Heart left ventricle (tissue), 16 donors: ENCODE measurements at regions of chr5 and their contacts with region 1.

Region 1: GRCh38 chr5:150656191-150657132 is 4.6 kb upstream of the MYOZ3 start:
- DNase-seq: peak; percentile 78 to 88 (median 84)
- ATAC-seq: peak; percentile 28 to 60 (median 48)
- H3K4me3 ChIP-seq: peak overlapping the region in 11 of 12 donors; percentile 30 to 65 (median 53)
- H3K27ac ChIP-seq: peak overlapping the region; percentile 81 to 96 (median 90)
- H3K4me1 ChIP-seq: peaks cover 3 to 82% (median 58%) of the 10 kb centered on the region in 12 donors
- H3K27me3 ChIP-seq: no peaks in the 10 kb centered on the region
- CTCF ChIP-seq: peak; percentile 50 to 90 (median 78)
- POLR2A ChIP-seq: no peak

Region 2: GRCh38 chr5:150449517-150450339 is 206.7 kb before region 1 on chr5 and contains the start of gene RPS14:
- intact Hi-C with region 1: loop called in 1 of 10 experiments (anchors 10 kb)
- DNase-seq: peak; percentile 93 to 96 (median 95)
- ATAC-seq: peak; percentile 96 to 98 (median 97)
- H3K4me3 ChIP-seq: peak within 1 kb of the TSS; percentile 75 to 90 (median 83)
- H3K27ac ChIP-seq: peak within 1 kb of the TSS; percentile 89 to 99 (median 96)
- H3K4me1 ChIP-seq: peaks cover 0 to 37% (median 16%) of the 10 kb centered on the region in 12 donors
- H3K27me3 ChIP-seq: no peaks in the 10 kb centered on the region
- CTCF ChIP-seq: peak; percentile 79 to 99 (median 94)
- POLR2A ChIP-seq: peak in 1 of 2 donors; percentile 84
- total RNA-seq, gene RPS14: 1,031 to 1,428 (median 1,294) TPM

Region 3: DNA sequence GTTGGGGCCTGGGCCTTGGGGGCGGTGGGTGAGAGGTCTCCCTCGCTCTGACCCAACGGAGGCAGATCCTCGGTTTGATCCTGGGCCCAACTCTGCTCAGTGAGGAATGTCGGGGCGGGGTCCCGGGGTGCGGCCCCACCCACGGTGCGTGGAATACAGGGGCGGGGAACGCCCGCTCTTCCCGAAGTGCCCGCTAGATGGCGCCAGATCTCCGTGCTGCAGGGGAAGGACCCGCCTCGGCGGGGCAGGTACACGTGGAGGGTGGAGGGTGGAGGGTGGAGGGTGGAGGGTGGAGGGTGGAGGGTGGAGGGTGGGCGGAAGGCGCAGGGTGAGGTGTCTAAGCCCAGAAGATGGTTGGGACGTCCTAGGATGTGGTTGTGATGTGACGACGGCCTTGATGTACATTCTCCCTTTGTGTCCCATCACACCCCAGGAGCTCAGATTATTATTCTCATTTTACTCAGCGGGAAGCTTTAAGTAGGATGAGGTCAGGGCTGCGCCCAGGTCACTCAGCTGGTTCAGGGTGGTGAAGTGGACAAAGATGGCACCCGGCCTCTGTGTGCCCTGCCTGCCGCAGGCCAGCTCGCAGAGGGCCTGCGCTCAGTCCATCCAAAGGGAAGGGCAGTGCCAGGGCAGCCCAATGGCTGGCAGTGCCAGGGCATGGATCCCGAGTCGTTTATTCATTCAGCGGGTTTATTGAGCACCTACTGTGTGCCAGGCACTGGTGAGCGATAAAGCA is 197.5 kb before region 1 on chr5:
- intact Hi-C with region 1: loop called in 5 of 10 experiments (anchors 10 kb)
- DNase-seq: peak; percentile 75 to 90 (median 80)
- ATAC-seq: peak; percentile 86 to 96 (median 92)
- H3K4me3 ChIP-seq: peak overlapping the region in 8 of 12 donors; percentile 15 to 46 (median 36)
- H3K27ac ChIP-seq: peak overlapping the region in 2 of 12 donors; percentile 2 to 53
- H3K4me1 ChIP-seq: peaks cover 0 to 14% (median 4%) of the 10 kb centered on the region in 12 donors
- H3K27me3 ChIP-seq: no peaks in the 10 kb centered on the region
- CTCF ChIP-seq: peak; percentile 68 to 97 (median 82)
- POLR2A ChIP-seq: no peak

Region 4: GRCh38 chr5:150560401-150561193 is 95.9 kb before region 1 on chr5:
- intact Hi-C with region 1: loop called (anchors 1 to 5 kb)
- DNase-seq: peak in 4 of 5 donors; percentile 81 to 86 (median 84)
- ATAC-seq: peak; percentile 74 to 90 (median 86)
- H3K4me3 ChIP-seq: no peak overlapping the region
- H3K27ac ChIP-seq: no peak overlapping the region
- H3K4me1 ChIP-seq: peaks cover 0 to 20% (median 4%) of the 10 kb centered on the region in 12 donors
- H3K27me3 ChIP-seq: no peaks in the 10 kb centered on the region
- CTCF ChIP-seq: peak; percentile 83 to 98 (median 96)
- POLR2A ChIP-seq: no peak

Region 5: DNA sequence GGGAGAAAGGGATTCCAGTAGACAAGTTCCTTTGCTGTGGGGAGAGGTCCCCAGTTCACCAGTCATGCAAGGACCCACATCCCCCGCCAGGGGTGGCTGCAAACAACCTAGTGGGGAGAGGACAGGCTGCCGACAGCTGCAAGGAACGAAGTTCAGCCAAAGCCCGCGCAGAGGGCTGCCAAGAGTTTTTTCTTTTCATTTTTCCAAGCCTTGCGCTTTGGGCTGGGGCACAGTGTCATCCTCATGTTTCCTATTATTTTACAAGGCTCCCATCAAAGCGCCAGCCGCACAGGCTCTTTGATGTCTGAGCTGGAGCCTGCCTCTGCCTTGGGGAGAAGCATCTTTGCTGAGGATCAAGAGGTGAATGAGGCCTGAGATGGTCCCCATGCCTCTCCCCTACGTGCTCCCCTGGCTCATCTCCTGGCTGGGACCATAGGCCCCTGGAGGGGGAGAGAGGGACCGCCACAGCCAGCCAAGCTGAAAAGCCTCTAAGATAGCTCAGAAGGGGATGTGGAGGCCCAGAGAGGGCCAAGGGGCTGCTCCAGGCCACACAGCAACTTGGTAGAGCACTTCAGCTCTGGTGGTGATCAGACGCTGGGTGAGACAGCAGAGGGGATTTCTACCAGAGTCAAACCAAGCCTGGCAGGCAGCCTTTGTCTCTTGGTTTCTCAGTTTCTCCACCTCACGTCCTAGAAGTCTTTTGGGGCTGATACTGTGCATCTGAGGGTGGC is 66.4 kb before region 1 on chr5:
- intact Hi-C with region 1: loop called in 9 of 10 experiments (anchors 1 to 5 kb)
- DNase-seq: peak; percentile 77 to 84 (median 84)
- ATAC-seq: peak; percentile 72 to 88 (median 76)
- H3K4me3 ChIP-seq: no peak overlapping the region
- H3K27ac ChIP-seq: peak overlapping the region in 10 of 12 donors; percentile 52 to 83 (median 74)
- H3K4me1 ChIP-seq: peaks cover 8 to 63% (median 55%) of the 10 kb centered on the region in 12 donors
- H3K27me3 ChIP-seq: no peaks in the 10 kb centered on the region
- CTCF ChIP-seq: peak; percentile 64 to 90 (median 80)
- POLR2A ChIP-seq: no peak

Region 6: GRCh38 chr5:150599917-150600499 is 56.5 kb before region 1 on chr5:
- intact Hi-C with region 1: loop called in 1 of 10 experiments (anchors 5 kb)
- DNase-seq: peak; percentile 87 to 92 (median 91)
- ATAC-seq: peak; percentile 43 to 76 (median 52)
- H3K4me3 ChIP-seq: peak overlapping the region in 4 of 12 donors; percentile 2 to 41 (median 28)
- H3K27ac ChIP-seq: peak overlapping the region; percentile 44 to 90 (median 80)
- H3K4me1 ChIP-seq: peaks cover 19 to 90% (median 67%) of the 10 kb centered on the region in 12 donors
- H3K27me3 ChIP-seq: no peaks in the 10 kb centered on the region
- CTCF ChIP-seq: no peak
- POLR2A ChIP-seq: no peak

Region 7: GRCh38 chr5:150689120-150689519 is 32.7 kb after region 1 on chr5:
- intact Hi-C with region 1: no loop called
- DNase-seq: no peak
- ATAC-seq: no peak
- H3K4me3 ChIP-seq: no peak overlapping the region
- H3K27ac ChIP-seq: no peak overlapping the region
- H3K4me1 ChIP-seq: no peaks in the 10 kb centered on the region
- H3K27me3 ChIP-seq: no peaks in the 10 kb centered on the region
- CTCF ChIP-seq: no peak
- POLR2A ChIP-seq: no peak

Region 8: GRCh38 chr5:150700594-150701293 is 44.3 kb after region 1 on chr5 and contains the start of gene RBM22:
- intact Hi-C with region 1: loop called in 2 of 10 experiments (anchors 2 to 5 kb)
- DNase-seq: peak; percentile 93 to 97 (median 95)
- ATAC-seq: peak; percentile 97 to 100 (median 99)
- H3K4me3 ChIP-seq: peak within 1 kb of the TSS; percentile 73 to 99 (median 94)
- H3K27ac ChIP-seq: peak within 1 kb of the TSS; percentile 92 to 99 (median 98)
- H3K4me1 ChIP-seq: peaks cover 0 to 24% (median 16%) of the 10 kb centered on the region in 12 donors
- H3K27me3 ChIP-seq: no peaks in the 10 kb centered on the region
- CTCF ChIP-seq: peak; percentile 43 to 81 (median 62)
- POLR2A ChIP-seq: peak in 1 of 2 donors; percentile 87
- total RNA-seq, gene RBM22: 23.5 to 42.3 (median 28.0) TPM